Head of caudate nucleus (tissue), 42 donors: ENCODE measurements at regions of chr5 and their contacts with region 1.

Region 1: GRCh38 chr5:34915139-34915855 is at the starts of genes BRIX1 and RAD1:
- DNase-seq: peak; percentile 93 to 99 (median 98)

Region 2: GRCh38 chr5:34929150-34929719 is 13.9 kb after region 1 on chr5 and contains the start of gene DNAJC21:
- intact Hi-C with region 1: loop called (anchors 2 kb)
- DNase-seq: peak; percentile 91 to 100 (median 99)

Region 3: DNA sequence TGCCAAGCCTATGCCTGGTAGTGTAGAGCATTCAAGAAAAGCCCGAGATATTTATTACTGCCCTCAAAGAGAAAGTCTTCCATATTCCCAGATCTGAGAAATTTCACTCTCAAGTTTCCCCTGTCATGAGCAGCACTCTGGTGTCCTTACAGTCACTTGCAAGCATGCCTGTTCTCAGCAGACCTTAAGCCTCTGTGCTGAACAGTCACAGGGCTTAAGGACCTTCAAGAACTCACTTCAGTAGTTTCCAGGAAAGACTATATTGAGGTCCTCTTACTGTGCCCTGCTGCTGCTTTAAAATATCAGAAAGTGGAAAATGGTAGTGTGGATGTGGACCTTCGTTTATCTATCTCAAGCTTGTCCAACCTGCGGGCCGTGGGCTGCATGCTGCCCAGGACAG is 67.5 kb after region 1 on chr5:
- intact Hi-C with region 1: no loop called
- DNase-seq: no peak

Region 4: DNA sequence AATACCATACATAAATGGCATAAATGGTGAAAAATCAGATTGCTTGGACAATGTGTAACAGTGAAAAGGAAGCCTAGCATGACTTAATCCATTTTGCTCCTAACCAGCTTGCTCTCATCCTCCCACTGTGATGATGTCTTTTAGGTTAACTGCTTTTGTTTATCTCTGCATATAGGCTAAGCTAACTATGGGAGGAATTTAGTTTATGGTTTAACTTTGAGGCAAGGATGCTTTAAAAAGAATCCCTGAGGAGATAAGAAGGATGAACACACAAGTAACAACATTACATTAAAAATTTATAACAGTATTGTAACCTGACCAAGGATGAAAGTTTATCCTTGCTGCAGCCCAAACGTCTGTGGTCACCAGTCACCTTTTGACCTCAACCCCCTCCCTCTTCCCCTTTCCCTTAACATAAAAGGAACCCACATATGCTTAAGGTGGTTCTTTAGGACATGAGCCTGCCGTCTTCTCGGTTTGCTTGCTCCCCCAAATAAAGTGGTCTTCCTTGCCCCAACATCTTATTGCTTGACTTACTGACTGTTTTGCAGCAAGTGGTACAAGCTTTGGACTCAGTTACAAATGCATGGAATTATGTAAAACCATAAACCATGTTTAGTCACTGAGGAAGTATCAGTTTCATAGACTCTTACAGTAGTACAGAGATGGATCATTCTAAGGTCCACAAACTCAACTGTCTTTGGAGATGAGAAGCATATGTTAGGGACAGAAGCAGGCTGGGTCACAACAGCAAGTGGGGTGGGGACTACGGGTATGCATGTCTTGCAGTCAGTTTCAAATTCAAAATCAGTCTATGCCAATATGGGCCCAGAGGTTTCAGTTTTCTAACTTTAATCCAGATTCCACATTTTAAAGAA is 101.1 kb after region 1 on chr5:
- intact Hi-C with region 1: no loop called
- DNase-seq: no peak